PC-3 (cell line): ENCODE measurements at regions of chr15 and their contacts with region 1.

Region 1: GRCh38 chr15:38440353-38441129 is 13.4 kb upstream of the FAM98B start:
- DNase-seq: peak; percentile 79
- ATAC-seq: peak; percentile 96
- H3K4me3 ChIP-seq: peak overlapping the region; percentile 27; the same call in 1 of the 2 replicates
- H3K27ac ChIP-seq: no peak overlapping the region
- H3K4me1 ChIP-seq: peaks cover 3% of the 10 kb centered on the region; the same call in 1 of the 2 replicates
- H3K27me3 ChIP-seq: peaks cover 12% of the 10 kb centered on the region
- CTCF ChIP-seq: peak; percentile 97

Region 2: DNA sequence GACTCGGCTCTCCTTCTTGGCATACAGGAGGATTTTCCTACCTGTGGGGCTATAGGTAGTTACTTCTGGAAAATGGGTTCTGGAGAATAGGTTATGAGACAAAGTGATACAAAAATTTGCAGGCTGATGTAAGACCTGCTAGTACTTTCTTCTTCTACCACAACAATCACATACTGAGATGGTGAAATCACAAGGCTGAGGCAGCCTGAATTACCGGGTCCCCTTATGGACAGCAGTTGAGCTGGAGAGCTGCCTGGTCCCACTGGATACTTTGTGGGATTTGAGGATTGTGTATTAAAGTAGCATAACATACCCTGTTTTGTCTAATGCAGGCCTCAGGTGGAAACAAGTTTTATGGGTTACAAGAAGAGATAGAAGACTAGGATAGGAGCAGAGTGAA is 73.1 kb before region 1 on chr15:
- CTCF ChIA-PET with region 1: no interaction called
- POLR2A ChIA-PET with region 1: no interaction called
- intact Hi-C with region 1: no loop called
- DNase-seq: no peak
- ATAC-seq: no peak
- H3K4me3 ChIP-seq: no peak overlapping the region
- H3K27ac ChIP-seq: no peak overlapping the region
- H3K4me1 ChIP-seq: no peaks in the 10 kb centered on the region
- H3K27me3 ChIP-seq: peaks cover 13% of the 10 kb centered on the region; the same call in 1 of the 2 replicates
- CTCF ChIP-seq: no peak

Region 3: GRCh38 chr15:38453971-38454695 is 13.6 kb after region 1 on chr15 and contains the start of gene FAM98B:
- CTCF ChIA-PET with region 1: interaction called, 17 read pairs
- POLR2A ChIA-PET with region 1: no interaction called
- intact Hi-C with region 1: no loop called
- DNase-seq: peak; percentile 95
- ATAC-seq: peak; percentile 90
- H3K4me3 ChIP-seq: peak within 1 kb of the TSS; percentile 98
- H3K27ac ChIP-seq: peak within 1 kb of the TSS; percentile 71
- H3K4me1 ChIP-seq: peaks cover 15% of the 10 kb centered on the region
- H3K27me3 ChIP-seq: peaks cover 8% of the 10 kb centered on the region
- CTCF ChIP-seq: no peak
- total RNA-seq, gene FAM98B: 7.8 and 21.1 TPM in 2 replicates

Region 4: DNA sequence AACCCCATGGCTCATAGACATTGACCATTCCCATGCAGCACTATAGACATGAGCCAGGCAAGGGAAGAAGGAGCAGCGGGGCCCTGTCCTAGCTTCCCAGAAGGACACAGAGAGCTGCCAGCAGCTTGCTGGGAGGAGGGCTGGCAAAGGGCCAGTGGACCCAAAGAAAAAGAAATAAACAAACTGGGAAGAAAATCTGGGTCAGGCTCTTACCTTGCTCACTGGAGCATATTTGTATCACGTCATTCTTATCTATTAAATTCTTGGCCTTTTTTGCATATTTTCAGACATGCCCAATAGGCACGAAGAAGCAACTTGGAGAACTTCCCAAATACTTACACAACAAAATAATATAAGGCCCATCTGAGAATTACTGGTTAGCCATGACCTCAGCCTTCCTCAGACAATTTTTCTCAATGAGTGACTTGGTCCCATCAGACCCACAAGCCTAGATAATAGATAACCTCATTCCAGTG is 95.7 kb after region 1 on chr15:
- CTCF ChIA-PET with region 1: no interaction called
- POLR2A ChIA-PET with region 1: no interaction called
- intact Hi-C with region 1: no loop called
- DNase-seq: no peak
- ATAC-seq: no peak
- H3K4me3 ChIP-seq: no peak overlapping the region
- H3K27ac ChIP-seq: no peak overlapping the region
- H3K4me1 ChIP-seq: peaks cover 7% of the 10 kb centered on the region
- H3K27me3 ChIP-seq: peaks cover 4% of the 10 kb centered on the region; the same call in 1 of the 2 replicates
- CTCF ChIP-seq: no peak

Region 5: DNA sequence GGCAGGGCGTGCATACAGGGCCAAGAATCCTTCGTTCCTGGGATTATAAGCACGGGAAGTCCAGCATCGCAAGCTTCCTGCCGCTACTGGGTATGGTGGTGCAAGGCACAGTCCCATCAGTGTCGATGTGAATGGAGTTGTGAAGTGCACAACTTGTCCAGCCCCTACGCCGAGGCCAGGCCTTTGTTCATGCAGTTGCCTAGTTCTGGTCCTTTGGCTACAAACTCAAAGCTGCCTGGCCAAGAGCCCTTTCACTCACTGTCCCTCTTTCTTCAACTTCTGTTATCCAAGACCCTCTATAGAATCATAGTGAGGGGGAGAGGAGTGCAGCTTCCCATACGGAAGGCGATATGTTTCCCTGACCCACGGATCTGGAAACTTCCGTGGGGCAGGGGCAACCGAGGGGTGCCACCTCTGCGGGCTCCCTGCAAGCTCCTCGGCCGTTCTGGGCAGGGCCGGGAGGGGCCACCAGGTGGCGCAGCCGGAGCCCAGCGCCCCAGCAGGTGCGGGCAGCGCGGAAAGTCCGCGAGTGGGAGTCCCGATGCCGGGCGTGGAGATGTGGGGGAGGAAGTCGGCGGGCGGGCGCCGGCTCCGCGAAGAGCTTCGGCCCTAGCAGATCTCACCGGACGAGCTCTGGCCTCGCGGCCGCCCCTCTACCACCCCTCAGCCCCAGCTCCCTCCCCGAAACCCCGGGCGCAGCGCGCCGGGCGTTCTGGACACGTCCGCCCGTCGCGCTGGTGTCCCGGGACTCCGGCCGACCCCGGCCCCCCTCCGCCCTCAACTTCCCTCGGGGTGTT is 123.4 kb after region 1 on chr15:
- CTCF ChIA-PET with region 1: interaction called, 12 read pairs
- POLR2A ChIA-PET with region 1: no interaction called
- intact Hi-C with region 1: loop called (anchors 5 kb)
- DNase-seq: peak; percentile 53
- ATAC-seq: peak; percentile 93
- H3K4me3 ChIP-seq: peak overlapping the region; percentile 65
- H3K27ac ChIP-seq: no peak overlapping the region
- H3K4me1 ChIP-seq: no peaks in the 10 kb centered on the region
- H3K27me3 ChIP-seq: peaks cover 55% of the 10 kb centered on the region
- CTCF ChIP-seq: peak; percentile 90

Region 6: DNA sequence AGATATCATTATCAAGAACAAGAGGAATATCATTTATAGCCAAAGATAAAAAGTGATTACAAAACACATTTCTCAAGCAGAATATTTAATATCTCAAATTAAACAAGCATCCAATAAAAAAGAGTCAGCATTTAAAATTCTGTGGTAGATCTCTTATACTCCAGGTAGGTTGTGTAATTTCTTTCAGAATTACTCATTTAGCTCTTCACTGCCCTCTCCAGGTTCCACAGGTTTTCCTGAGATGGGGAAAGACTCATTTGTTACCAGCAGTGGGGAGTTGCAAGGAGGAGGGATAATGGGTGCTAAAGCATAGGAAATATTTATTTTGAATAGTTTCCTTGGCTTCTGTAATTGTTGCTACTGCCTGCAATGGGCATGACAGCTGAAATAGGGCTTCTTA is 207.1 kb after region 1 on chr15:
- CTCF ChIA-PET with region 1: interaction called, 7 read pairs
- POLR2A ChIA-PET with region 1: no interaction called
- intact Hi-C with region 1: loop called (anchors 1 kb)
- DNase-seq: peak; percentile 63
- ATAC-seq: peak; percentile 77
- H3K4me3 ChIP-seq: no peak overlapping the region
- H3K27ac ChIP-seq: no peak overlapping the region
- H3K4me1 ChIP-seq: no peaks in the 10 kb centered on the region
- H3K27me3 ChIP-seq: peaks cover 69% of the 10 kb centered on the region
- CTCF ChIP-seq: peak; percentile 69

Region 7: DNA sequence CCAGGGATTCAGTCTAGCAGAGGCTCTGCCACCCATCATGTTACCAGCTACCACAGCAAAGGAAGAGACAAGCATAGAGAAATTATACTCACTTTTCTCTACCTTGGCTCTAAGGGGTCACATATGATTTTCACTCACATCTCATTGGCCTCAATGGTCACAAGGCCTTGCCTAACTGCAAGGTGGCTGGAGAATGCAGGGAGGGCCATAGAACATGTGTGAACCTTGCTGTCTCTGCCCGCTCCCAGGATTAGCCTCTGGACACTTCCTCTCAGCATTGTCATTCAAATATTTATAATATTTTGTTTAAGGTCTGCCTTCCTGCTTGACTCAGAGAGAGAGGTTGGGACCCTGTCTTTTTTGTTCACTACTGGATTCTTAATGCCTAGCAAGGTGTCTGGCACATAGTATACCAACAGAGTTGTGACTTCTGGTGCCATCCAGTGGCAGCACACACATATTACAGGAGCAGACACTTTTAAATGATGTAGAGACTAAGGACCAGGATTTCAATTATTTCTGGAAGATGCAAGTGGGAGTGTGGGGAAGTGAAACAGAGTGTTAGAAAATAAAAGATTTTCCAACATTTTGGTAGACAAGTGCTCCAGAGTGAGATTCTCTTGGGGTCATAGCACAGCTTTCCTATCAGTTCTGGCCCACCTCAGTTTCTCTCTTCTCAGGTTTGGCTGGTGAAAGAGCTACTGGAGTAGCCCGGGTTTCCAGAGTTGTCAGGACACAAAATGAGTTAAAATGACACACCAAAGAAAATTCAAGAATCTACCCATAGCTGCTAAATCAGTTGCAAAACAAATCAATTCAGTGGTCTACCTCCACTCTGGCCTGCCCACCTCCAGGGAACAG is 243.1 kb after region 1 on chr15:
- CTCF ChIA-PET with region 1: no interaction called
- POLR2A ChIA-PET with region 1: no interaction called
- intact Hi-C with region 1: loop called (anchors 1 kb)
- DNase-seq: peak; percentile 65
- ATAC-seq: peak; percentile 93
- H3K4me3 ChIP-seq: no peak overlapping the region
- H3K27ac ChIP-seq: no peak overlapping the region
- H3K4me1 ChIP-seq: peaks cover under 1% of the 10 kb centered on the region
- H3K27me3 ChIP-seq: no peaks in the 10 kb centered on the region
- CTCF ChIP-seq: peak; percentile 86

Region 8: DNA sequence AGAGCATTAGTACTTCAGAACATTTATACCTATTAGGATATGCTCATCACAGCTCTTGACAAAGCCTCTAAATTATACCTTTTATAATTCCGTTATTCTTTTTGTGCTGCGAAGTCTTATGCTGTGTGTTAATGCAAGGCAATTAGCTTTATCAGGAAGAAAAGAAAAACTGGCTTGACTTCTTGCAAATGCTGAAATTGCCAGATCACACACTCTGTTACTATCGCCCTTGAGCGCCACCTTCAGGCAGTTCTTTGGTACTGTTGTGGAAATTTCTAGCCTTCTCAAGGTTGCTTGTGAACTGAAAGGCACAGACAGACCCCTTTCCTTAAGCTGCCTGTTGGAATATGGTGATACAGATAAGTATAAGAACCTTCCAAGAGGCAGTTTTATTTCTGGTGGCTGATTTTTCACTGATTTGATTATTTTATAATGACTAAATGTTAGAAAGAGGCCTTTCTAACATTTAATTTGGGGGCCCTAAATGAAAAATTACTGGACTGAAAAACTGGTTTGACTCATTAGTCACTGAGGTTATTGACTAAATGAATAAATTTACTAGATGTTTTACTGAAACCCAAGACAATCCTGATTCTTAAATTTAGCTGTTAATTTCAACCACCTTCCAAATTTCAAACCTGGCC is 250.3 kb after region 1 on chr15:
- CTCF ChIA-PET with region 1: interaction called, 11 read pairs
- POLR2A ChIA-PET with region 1: no interaction called
- intact Hi-C with region 1: no loop called
- DNase-seq: peak; percentile 84
- ATAC-seq: peak; percentile 73
- H3K4me3 ChIP-seq: no peak overlapping the region
- H3K27ac ChIP-seq: no peak overlapping the region
- H3K4me1 ChIP-seq: peaks cover 6% of the 10 kb centered on the region
- H3K27me3 ChIP-seq: no peaks in the 10 kb centered on the region
- CTCF ChIP-seq: peak; percentile 88

Region 9: GRCh38 chr15:38699633-38700230 is 259.2 kb after region 1 on chr15:
- CTCF ChIA-PET with region 1: interaction called, 32 read pairs
- POLR2A ChIA-PET with region 1: no interaction called
- intact Hi-C with region 1: no loop called
- DNase-seq: peak; percentile 84
- ATAC-seq: peak; percentile 80
- H3K4me3 ChIP-seq: no peak overlapping the region
- H3K27ac ChIP-seq: no peak overlapping the region
- H3K4me1 ChIP-seq: no peaks in the 10 kb centered on the region
- H3K27me3 ChIP-seq: no peaks in the 10 kb centered on the region
- CTCF ChIP-seq: peak; percentile 96